ENCODE measurements at regions of chr6 and their contacts with region 1.

Region 1: GRCh38 chr6:41787219-41787917 is at the start of gene TOMM6:
- DNase-seq: peak; percentile 85
- H3K4me3 ChIP-seq: peak within 1 kb of the TSS; percentile 100
- H3K27ac ChIP-seq: peak within 1 kb of the TSS; percentile 84
- H3K27me3 ChIP-seq: no peaks in the 10 kb centered on the region
- CTCF ChIP-seq: peak; percentile 75
- polyA plus RNA-seq, gene TOMM6: 165 and 192 TPM in 2 replicates

Region 2: GRCh38 chr6:41602864-41603608 is 184.3 kb before region 1 on chr6:
- CTCF ChIA-PET with region 1: interaction called, 12 read pairs
- POLR2A ChIA-PET with region 1: no interaction called
- DNase-seq: peak; percentile 57
- H3K4me3 ChIP-seq: peak overlapping the region; percentile 27
- H3K27ac ChIP-seq: peak overlapping the region; percentile 21
- H3K27me3 ChIP-seq: no peaks in the 10 kb centered on the region
- CTCF ChIP-seq: peak; percentile 94

Region 3: DNA sequence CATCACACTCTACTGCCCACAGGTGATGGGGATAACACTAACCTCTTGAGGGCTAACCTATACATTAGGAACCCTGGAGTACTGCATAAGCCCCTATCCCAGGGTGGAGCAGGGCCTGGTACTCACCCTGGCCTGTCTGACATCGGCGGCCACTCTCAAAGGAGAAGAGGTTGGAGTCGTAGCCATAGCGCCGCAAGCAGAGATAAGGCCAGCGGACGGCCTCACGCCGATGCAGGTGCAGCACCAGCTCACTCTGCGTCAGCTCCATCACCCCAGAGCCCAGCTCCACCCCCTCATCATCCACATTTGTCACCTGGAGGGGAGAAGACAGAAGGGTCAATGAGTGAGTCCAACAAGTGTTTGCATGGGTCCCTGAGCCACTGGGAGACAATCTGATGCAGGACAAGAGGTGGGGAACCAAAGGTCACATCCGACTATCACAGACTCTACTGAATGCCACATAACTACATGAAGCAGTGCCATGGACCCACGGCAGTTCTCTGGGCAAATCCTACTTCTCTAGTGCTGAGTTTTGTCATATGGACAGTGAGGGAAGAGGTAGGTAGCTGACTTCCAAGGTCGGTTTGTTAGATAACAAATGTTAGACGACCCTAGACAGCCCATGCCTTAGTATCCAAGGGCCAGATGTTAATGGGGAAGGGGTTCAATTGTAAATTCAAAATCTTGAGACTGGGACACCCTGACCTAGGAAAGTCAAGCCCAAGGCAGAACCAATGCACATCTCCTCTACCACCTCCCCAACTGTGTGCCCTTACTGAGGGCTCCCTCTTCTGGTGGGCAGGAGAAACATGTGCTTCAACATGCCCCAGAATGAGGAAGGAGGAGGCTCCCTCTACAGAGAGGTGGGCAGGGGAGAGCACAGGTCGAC is 11.8 kb before region 1 on chr6:
- CTCF ChIA-PET with region 1: interaction called, 37 read pairs
- POLR2A ChIA-PET with region 1: no interaction called
- DNase-seq: no peak
- H3K4me3 ChIP-seq: no peak overlapping the region
- H3K27ac ChIP-seq: no peak overlapping the region
- H3K27me3 ChIP-seq: no peaks in the 10 kb centered on the region
- CTCF ChIP-seq: peak; percentile 83

Region 4: DNA sequence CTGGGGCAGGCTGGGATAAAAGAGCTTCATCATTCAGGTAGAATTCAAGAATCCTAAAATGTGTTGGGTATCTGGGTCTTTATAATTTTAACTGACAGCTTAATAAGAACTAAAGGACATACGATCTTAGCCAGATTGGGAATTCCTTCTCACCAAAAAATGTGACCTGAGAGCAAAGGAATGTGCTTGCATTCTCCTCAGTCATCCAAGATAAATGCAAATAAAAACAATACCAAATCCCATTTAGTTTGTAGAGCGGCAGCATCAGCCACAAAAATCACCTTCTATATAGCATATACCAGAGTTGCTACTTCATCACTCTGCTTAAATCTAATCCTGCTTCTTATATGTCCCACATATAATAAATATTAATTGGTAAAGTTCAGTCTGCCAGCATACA is 90.9 kb after region 1 on chr6:
- CTCF ChIA-PET with region 1: interaction called, 12 read pairs
- POLR2A ChIA-PET with region 1: no interaction called
- DNase-seq: peak; percentile 41
- H3K4me3 ChIP-seq: no peak overlapping the region
- H3K27ac ChIP-seq: peak overlapping the region; percentile 60
- H3K27me3 ChIP-seq: no peaks in the 10 kb centered on the region
- CTCF ChIP-seq: no peak

Region 5: GRCh38 chr6:41936073-41936837 is 148.9 kb after region 1 on chr6:
- CTCF ChIA-PET with region 1: interaction called, 36 read pairs
- POLR2A ChIA-PET with region 1: interaction called, 3 read pairs
- DNase-seq: peak; percentile 65
- H3K4me3 ChIP-seq: no peak overlapping the region
- H3K27ac ChIP-seq: peak overlapping the region; percentile 47
- H3K27me3 ChIP-seq: no peaks in the 10 kb centered on the region
- CTCF ChIP-seq: peak; percentile 94

Region 6: DNA sequence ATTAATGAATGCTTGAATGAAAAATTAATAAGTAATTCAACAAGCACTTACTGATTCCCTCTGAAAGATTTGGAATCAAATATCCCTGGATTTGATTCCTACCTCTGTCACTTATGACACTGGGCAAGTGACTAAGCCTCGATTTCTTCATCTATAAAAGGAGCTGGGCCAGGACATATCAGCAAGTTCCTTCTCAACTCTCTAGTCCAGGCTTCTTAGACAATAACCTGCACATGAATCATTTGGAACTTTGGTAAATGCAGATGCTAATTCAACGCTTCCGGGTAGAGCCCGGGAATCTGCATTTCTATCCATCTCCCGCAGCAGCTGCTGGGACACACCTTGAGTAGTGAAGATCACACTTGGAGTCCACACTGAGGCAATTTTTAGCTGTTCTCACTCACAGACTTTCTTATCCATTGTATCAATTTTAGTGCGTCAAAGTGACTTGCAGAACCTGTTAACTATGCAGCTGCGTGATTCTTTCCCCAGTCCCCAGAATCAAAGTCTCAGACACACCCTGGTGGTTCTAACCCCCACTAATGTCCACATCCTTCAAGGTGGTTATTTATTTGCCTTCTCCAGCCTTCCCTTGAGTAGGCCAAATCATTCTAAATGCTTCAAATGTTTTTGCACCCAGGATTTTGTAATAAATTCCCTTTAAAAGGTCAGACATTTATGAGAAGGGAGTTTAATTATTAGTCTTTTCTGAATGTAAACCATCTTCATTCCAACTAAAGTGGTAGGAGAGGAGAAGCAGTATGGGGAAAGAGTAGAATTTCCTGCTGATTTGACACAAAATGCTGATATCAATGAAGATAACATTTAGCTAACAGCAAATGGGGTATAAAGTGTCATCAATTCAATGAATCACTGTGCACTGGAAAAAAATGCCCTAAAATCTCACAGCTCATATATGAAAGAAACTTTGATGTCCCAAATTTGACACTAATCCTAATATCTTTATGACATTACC is 180.2 kb after region 1 on chr6:
- CTCF ChIA-PET with region 1: interaction called, 14 read pairs
- POLR2A ChIA-PET with region 1: no interaction called
- DNase-seq: no peak
- H3K4me3 ChIP-seq: no peak overlapping the region
- H3K27ac ChIP-seq: peak overlapping the region; percentile 54
- H3K27me3 ChIP-seq: no peaks in the 10 kb centered on the region
- CTCF ChIP-seq: no peak

Region 7: DNA sequence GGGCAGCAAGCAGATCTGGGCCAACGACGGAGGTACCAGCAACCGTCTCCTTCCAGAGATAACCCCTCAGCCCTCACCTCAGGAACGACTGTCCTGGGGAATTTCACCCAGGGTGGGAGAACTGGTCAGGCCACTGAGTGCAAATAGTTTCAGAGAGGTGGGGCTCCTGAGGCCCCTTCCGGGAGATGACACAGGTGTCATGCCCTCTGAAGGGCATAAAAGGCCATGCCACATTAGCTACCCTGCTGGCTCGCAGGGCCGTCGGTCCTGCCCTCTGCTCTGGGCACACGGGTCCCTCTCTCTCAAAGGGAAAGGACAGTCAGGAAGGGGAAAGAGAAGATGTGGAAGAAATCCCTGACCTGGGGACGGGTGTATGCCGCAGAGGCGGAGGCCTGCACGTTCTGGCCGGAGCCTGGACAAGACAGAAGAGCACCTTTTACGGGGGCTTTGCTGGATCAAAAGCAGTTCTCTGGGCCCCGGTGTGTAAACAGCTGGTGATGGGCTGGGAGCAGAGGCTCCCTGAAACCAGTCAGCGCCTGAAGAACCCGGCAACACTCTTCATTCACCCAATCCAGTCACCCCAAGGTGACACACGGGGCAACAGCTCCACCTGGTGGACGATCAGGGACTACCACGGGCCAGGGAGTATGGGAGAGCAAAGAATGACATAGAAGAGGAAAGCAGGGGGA is 256.6 kb after region 1 on chr6:
- CTCF ChIA-PET with region 1: interaction called, 65 read pairs
- POLR2A ChIA-PET with region 1: interaction called, 5 read pairs
- DNase-seq: no peak
- H3K4me3 ChIP-seq: no peak overlapping the region
- H3K27ac ChIP-seq: no peak overlapping the region
- H3K27me3 ChIP-seq: no peaks in the 10 kb centered on the region
- CTCF ChIP-seq: peak; percentile 99

Measured in AG04450 (cell line).